PC-9 (cell line): ENCODE measurements at regions of chr19 and their contacts with region 1.

Region 1: GRCh38 chr19:15129856-15130597 is 22.8 kb downstream of the SYDE1 start:
- DNase-seq: peak; percentile 61 to 93
- H3K4me3 ChIP-seq: no peak overlapping the region
- H3K27ac ChIP-seq: 0 out of 2 replicates have a peak overlapping the region, but pooled peaks have one; percentile 11
- H3K4me1 ChIP-seq: peaks cover 30% of the 10 kb centered on the region
- H3K27me3 ChIP-seq: no peaks in the 10 kb centered on the region
- CTCF ChIP-seq: no peak

Region 2: DNA sequence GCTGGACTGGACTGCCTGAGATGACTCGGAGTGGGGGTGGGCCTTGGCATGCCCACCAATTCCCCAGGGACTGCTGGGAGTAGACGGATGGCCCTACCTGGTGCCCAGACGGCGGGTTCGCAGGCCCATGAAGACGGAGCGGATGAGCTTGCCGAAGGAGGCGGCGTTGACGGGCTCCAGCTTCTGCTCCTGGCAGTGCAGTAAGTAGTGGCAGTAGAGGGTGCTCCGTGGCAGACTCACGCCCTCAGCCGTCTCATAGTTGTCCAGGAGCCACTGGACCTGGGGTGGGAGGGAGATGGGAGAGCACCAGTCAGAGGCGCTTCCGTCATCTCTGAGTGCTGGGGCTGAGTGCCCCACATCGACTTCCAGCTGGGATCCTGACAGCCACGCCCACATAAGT is 1160.1 kb before region 1 on chr19:
- CTCF ChIA-PET with region 1: no interaction called
- POLR2A ChIA-PET with region 1: interaction called, 10 read pairs
- intact Hi-C with region 1: no loop called
- DNase-seq: no peak
- H3K4me3 ChIP-seq: no peak overlapping the region
- H3K27ac ChIP-seq: no peak overlapping the region
- H3K4me1 ChIP-seq: no peaks in the 10 kb centered on the region
- H3K27me3 ChIP-seq: no peaks in the 10 kb centered on the region
- CTCF ChIP-seq: no peak

Region 3: DNA sequence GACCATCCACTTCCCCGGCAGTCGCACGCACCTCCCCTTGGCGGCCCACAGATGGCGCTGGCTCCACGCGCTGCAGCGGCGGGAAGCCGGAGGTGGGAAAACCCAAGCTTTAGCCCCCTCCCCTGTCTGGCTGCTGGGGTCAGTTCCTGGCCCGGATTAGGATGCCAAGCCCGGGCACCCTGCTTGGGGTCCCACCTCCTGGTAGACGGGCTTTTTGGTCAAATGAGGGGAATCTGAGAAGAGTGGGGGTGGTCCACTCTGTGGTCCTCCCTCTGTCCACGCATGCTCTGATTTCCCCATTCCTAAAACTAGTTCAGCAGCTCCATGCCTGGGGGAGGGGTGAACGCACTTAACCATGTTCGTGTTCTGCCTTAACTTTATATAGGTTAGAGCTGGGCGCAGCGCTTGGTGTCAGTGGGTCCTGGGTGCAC is 343.6 kb before region 1 on chr19:
- CTCF ChIA-PET with region 1: no interaction called
- POLR2A ChIA-PET with region 1: no interaction called
- intact Hi-C with region 1: no loop called
- DNase-seq: no peak
- H3K4me3 ChIP-seq: peak overlapping the region; percentile 48; the same call in 1 of the 2 replicates
- H3K27ac ChIP-seq: no peak overlapping the region
- H3K4me1 ChIP-seq: peaks cover 9% of the 10 kb centered on the region
- H3K27me3 ChIP-seq: no peaks in the 10 kb centered on the region
- CTCF ChIP-seq: peak; percentile 90

Region 4: DNA sequence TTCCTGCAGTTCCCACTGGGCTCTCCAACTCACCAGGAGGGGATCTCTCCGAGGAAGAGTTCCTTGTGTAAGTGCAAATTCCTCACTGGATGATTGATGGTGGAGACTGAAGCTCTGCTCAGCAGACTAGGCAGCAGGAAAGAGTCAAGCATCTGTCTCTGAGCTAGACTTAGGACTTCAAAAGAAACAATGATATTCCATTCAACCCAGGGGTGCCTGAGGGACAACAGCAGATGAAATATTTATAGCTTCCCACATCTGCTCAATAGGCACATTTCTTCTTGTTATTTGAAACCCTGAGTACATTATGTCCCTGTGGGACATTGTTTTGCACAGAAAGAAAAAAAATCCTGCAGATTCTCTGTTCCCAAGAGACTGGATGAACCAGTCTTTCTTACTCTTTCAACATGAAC is 295.0 kb before region 1 on chr19 and contains the starts of genes OR7A5 and OR7C1:
- CTCF ChIA-PET with region 1: interaction called, 10 read pairs
- POLR2A ChIA-PET with region 1: no interaction called
- intact Hi-C with region 1: no loop called
- DNase-seq: peak in 1 of 2 experiments; percentile 63
- H3K4me3 ChIP-seq: no peak within 1 kb of the TSS
- H3K27ac ChIP-seq: no peak within 1 kb of the TSS
- H3K4me1 ChIP-seq: peaks cover 17% of the 10 kb centered on the region
- H3K27me3 ChIP-seq: no peaks in the 10 kb centered on the region
- CTCF ChIP-seq: no peak
- total RNA-seq, gene OR7A5: not detected in 2 replicates
- total RNA-seq, gene OR7C1: not detected in 2 replicates